Panc1 (cell line): ENCODE measurements at regions of chr12 and their contacts with region 1.

Region 1: DNA sequence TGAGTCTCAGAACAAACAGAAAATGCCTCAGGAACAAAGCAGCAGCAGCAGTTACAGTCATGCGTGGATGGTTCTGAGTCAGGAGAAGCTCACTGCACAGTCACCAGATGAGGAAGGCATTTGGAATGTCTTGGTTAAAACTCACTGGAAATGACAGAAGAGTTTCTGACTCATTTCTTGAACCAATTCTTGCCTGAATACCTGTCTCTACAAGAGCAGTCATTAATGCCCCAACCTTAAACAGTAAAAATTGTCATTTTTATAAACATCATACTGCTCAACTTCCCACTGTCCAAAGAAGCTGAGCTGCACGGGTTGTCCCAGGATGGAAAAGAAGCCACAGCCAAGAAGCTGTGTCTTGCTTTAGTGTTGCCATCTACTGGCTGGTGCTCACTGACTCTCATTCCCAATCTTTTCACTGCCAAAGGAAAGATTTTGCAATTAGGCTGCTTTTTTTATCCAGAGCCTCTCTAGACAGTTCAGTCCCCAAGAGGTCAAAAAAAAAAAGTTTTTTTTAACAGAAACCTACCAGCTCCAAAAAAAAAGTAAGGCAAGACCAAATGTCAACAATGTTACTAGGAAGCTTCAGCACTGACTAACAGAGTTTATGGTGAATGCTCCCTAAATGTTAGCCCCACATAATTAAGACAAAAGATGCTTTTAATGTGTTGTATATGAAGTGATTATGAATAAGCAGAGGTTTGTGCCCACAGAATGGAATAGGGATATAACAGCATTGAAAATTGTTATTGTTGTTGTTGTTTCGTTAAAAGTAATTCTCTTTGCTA is 40.4 kb downstream of the KICS2 start:
- DNase-seq: peak; percentile 93
- ATAC-seq: peak; percentile 96
- H3K4me3 ChIP-seq: peak overlapping the region in 1 of 2 experiments; percentile 2; a peak in 1 of 4 replicates
- H3K27ac ChIP-seq: peak overlapping the region; percentile 86
- H3K4me1 ChIP-seq: peaks cover 19% of the 10 kb centered on the region
- H3K27me3 ChIP-seq: no peaks in the 10 kb centered on the region
- CTCF ChIP-seq: peak; percentile 80

Region 2: DNA sequence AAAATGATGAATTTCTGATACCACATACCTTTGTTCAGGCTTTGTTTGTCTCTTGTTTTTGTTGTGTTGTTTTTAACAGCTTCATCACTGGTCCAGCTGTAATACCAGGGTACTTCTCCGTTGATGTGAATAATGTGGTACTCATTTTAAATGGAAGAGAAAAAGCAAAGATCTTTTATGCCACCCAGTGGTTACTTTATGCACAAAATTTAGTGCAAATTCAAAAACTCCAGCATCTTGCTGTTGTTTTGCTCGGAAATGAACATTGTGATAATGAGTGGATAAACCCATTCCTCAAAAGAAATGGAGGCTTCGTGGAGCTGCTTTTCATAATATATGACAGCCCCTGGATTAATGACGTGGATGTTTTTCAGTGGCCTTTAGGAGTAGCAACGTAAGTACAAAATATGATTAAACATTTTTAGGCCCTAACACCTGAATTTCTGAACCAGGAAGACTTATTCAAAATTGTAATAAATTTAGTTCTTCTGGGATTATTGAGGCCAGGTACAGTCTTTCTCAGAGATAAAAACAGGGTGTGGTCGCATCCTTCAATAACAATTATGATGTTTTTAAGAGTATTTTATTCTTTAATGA is 379.6 kb before region 1 on chr12:
- CTCF ChIA-PET with region 1: no interaction called
- POLR2A ChIA-PET with region 1: no interaction called
- in situ Hi-C with region 1: no loop called
- intact Hi-C with region 1: no loop called
- DNase-seq: no peak
- ATAC-seq: peak; percentile 72; the same call in 1 of the 2 replicates
- H3K4me3 ChIP-seq: no peak overlapping the region
- H3K27ac ChIP-seq: no peak overlapping the region
- H3K4me1 ChIP-seq: no peaks in the 10 kb centered on the region
- H3K27me3 ChIP-seq: no peaks in the 10 kb centered on the region
- CTCF ChIP-seq: peak; percentile 71; the same call in 1 of the 2 replicates

Region 3: DNA sequence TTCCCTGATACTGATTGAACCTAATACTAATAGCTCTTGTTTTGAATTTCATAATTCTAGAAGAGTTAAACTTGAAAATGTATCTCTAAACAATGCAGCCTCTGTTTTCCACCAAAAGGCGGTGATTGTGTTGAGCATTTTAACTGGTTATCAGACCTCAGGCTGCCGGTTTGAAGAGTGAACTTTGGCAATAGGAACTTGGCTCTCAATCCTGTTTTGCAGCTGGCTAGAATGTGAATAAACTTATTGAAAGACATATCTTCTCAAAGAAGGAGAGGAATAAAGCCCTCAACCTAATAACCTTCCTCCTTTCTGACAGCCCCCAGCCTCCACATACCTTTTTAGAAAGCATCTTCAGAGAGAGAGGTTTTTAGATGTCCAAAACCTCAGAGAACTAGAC is 231.8 kb before region 1 on chr12:
- CTCF ChIA-PET with region 1: no interaction called
- POLR2A ChIA-PET with region 1: interaction called, 10 read pairs
- in situ Hi-C with region 1: no loop called
- intact Hi-C with region 1: no loop called
- DNase-seq: no peak
- ATAC-seq: no peak
- H3K4me3 ChIP-seq: no peak overlapping the region
- H3K27ac ChIP-seq: peak overlapping the region; percentile 62
- H3K4me1 ChIP-seq: peaks cover 26% of the 10 kb centered on the region; the same call in 1 of the 2 replicates
- H3K27me3 ChIP-seq: no peaks in the 10 kb centered on the region
- CTCF ChIP-seq: no peak

Region 4: GRCh38 chr12:64019118-64019517 is 162.6 kb before region 1 on chr12:
- CTCF ChIA-PET with region 1: no interaction called
- POLR2A ChIA-PET with region 1: no interaction called
- in situ Hi-C with region 1: no loop called
- intact Hi-C with region 1: no loop called
- DNase-seq: no peak
- ATAC-seq: no peak
- H3K4me3 ChIP-seq: no peak overlapping the region
- H3K27ac ChIP-seq: no peak overlapping the region
- H3K4me1 ChIP-seq: no peaks in the 10 kb centered on the region
- H3K27me3 ChIP-seq: no peaks in the 10 kb centered on the region
- CTCF ChIP-seq: no peak